ENCODE measurements at regions of chr12 and their contacts with region 1.

Region 1: GRCh38 chr12:17609153-17609552 is 480.8 kb downstream of the RERGL start:
- DNase-seq: no peak
- H3K4me3 ChIP-seq: no peak overlapping the region
- H3K27ac ChIP-seq: no peak overlapping the region
- H3K4me1 ChIP-seq: no peaks in the 10 kb centered on the region
- H3K27me3 ChIP-seq: no peaks in the 10 kb centered on the region
- CTCF ChIP-seq: no peak
- EP300 ChIP-seq: no peak
- RAD21 ChIP-seq: no peak

Region 2: GRCh38 chr12:17278946-17279345 is 330.2 kb before region 1 on chr12:
- CTCF ChIA-PET with region 1: no interaction called
- POLR2A ChIA-PET with region 1: no interaction called
- DNase-seq: no peak
- H3K4me3 ChIP-seq: no peak overlapping the region
- H3K27ac ChIP-seq: no peak overlapping the region
- H3K4me1 ChIP-seq: no peaks in the 10 kb centered on the region
- H3K27me3 ChIP-seq: no peaks in the 10 kb centered on the region
- CTCF ChIP-seq: no peak; the same call in 1 of the 2 replicates
- EP300 ChIP-seq: no peak
- RAD21 ChIP-seq: no peak

Region 3: GRCh38 chr12:17593715-17594409 is 15.3 kb before region 1 on chr12:
- CTCF ChIA-PET with region 1: no interaction called
- POLR2A ChIA-PET with region 1: no interaction called
- DNase-seq: no peak
- H3K4me3 ChIP-seq: no peak overlapping the region
- H3K27ac ChIP-seq: no peak overlapping the region
- H3K4me1 ChIP-seq: no peaks in the 10 kb centered on the region; a peak in 1 of 4 replicates
- H3K27me3 ChIP-seq: no peaks in the 10 kb centered on the region
- CTCF ChIP-seq: no peak
- EP300 ChIP-seq: no peak
- RAD21 ChIP-seq: no peak

Region 4: GRCh38 chr12:17642340-17642650 is 33.1 kb after region 1 on chr12:
- CTCF ChIA-PET with region 1: interaction called, 14 read pairs
- POLR2A ChIA-PET with region 1: no interaction called
- DNase-seq: no peak
- H3K4me3 ChIP-seq: peak overlapping the region in 1 of 2 experiments; percentile 63; a peak in 1 of 4 replicates
- H3K27ac ChIP-seq: no peak overlapping the region
- H3K4me1 ChIP-seq: no peaks in the 10 kb centered on the region
- H3K27me3 ChIP-seq: no peaks in the 10 kb centered on the region
- CTCF ChIP-seq: no peak; the same call in 1 of the 2 replicates
- EP300 ChIP-seq: no peak
- RAD21 ChIP-seq: no peak

Measured in SK-N-SH (cell line).